ENCODE measurements at regions of chr6 and their contacts with region 1.

Region 1: DNA sequence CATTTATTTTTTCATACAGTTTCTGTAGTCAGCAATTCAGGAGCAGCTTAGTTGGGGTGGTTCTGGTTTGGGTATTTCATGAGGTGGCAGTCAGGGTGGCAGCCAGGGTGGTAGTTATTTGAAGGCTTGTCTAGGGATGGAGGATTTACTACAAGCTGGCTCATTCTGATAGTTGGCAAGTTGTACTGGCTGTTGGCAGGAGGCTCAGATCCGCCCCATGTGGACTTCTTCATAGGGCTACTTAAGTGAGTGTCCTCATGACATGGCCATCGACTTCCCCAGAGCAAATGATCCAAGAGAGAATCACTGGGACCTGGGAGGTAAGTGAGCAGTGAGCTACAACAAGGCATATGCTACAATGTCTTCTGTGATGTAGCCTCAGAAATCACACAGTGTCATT is 22.4 kb upstream of the CDKAL1 start:
- DNase-seq: no peak
- ATAC-seq: no peak
- H3K4me3 ChIP-seq: no peak overlapping the region
- H3K27ac ChIP-seq: no peak overlapping the region
- H3K4me1 ChIP-seq: no peaks in the 10 kb centered on the region
- H3K27me3 ChIP-seq: no peaks in the 10 kb centered on the region
- CTCF ChIP-seq: no peak
- POLR2A ChIP-seq: no peak

Region 2: DNA sequence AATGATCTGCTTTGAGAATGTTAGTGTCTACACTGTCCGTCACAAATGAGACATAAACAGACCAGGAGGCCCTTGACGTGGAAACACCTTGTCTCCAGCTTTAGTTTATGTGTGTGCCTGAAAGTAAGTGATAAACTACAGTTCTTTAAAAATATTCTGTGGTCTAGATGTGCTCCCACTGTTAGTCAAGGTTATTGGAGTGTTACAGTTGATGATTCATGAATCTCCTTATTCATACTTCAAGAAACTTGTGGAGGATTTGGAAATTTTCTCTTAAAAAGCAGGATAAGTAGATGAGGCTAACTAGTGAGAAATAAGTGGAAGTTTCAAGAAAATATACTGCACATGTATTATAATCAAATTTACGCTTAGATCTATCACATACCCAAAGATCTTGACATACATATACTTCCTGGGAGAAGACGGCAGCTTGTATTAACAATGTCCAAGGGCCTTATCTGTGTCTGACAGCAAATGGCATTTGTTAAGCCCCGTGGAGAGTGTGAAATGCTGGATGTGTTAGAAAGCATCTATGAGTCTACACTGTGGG is 209.1 kb before region 1 on chr6:
- intact Hi-C with region 1: loop called (anchors 10 kb)
- DNase-seq: no peak
- ATAC-seq: no peak
- H3K4me3 ChIP-seq: no peak overlapping the region
- H3K27ac ChIP-seq: no peak overlapping the region
- H3K4me1 ChIP-seq: no peaks in the 10 kb centered on the region
- H3K27me3 ChIP-seq: no peaks in the 10 kb centered on the region
- CTCF ChIP-seq: no peak
- POLR2A ChIP-seq: no peak